Right ventricle myocardium superior (tissue), 1 donor: ENCODE measurements at regions of chr6 and their contacts with region 1.

Region 1: DNA sequence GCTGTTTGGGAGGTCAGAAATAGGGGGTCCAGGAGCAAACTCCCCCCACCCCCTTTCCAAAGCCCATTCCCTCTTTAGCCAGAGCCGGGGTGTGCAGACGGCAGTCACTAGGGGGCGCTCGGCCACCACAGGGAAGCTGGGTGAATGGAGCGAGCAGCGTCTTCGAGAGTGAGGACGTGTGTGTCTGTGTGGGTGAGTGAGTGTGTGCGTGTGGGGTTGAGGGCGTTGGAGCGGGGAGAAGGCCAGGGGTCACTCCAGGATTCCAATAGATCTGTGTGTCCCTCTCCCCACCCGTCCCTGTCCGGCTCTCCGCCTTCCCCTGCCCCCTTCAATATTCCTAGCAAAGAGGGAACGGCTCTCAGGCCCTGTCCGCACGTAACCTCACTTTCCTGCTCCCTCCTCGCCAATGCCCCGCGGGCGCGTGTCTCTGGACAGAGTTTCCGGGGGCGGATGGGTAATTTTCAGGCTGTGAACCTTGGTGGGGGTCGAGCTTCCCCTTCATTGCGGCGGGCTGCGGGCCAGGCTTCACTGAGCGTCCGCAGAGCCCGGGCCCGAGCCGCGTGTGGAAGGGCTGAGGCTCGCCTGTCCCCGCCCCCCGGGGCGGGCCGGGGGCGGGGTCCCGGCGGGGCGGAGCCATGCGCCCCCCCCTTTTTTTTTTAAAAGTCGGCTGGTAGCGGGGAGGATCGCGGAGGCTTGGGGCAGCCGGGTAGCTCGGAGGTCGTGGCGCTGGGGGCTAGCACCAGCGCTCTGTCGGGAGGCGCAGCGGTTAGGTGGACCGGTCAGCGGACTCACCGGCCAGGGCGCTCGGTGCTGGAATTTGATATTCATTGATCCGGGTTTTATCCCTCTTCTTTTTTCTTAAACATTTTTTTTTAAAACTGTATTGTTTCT is at the start of gene VEGFA:
- DNase-seq: peak; percentile 95
- ATAC-seq: peak; percentile 77
- total RNA-seq, gene VEGFA: 230 TPM

Region 2: GRCh38 chr6:43723737-43724295 is 46.0 kb before region 1 on chr6:
- intact Hi-C with region 1: loop called (anchors 5 kb)
- DNase-seq: peak; percentile 75
- ATAC-seq: peak; percentile 90

Region 3: DNA sequence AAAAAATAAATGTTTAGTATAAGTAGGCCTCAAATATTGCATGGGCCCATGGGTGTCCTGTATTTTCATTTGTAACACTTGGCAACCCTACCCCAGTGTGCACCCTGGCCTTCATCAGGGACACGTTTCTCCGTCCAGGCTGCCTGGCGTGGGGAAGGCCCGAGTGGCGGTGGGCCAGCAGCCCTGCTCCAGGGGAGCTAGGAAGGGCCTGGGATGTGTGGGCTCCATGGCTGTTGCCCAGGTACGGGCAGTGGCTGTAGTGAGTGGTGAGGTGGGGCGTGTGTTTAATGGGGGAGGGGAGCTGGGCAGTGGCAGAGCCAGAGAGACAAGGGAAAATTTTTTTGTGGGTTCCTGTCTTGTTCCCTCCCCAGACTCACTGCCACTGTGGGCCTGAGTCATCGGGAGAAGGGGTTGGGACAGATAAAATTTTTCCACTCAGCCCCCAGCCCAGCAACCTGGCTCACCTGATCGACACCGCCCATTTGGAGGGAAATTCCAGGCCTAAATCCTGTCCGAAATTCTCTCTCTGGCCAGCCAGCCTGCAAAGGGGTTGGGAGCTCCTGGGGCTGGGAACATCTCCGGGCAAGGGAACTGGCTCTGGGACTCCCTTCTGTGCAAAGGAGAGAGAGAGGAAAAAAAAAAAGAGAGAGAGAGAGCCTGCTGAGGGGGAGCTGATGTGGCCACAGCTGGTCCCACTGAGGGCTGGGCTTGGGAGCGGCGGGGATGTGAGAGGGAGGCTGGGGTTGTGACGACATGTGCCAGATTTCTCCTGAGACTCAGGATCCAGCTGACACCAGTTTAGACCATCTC is 32.3 kb before region 1 on chr6:
- intact Hi-C with region 1: no loop called
- DNase-seq: peak; percentile 76
- ATAC-seq: peak; percentile 93

Region 4: GRCh38 chr6:43933148-43933885 is 163.5 kb after region 1 on chr6:
- intact Hi-C with region 1: no loop called
- DNase-seq: no peak
- ATAC-seq: no peak

Region 5: DNA sequence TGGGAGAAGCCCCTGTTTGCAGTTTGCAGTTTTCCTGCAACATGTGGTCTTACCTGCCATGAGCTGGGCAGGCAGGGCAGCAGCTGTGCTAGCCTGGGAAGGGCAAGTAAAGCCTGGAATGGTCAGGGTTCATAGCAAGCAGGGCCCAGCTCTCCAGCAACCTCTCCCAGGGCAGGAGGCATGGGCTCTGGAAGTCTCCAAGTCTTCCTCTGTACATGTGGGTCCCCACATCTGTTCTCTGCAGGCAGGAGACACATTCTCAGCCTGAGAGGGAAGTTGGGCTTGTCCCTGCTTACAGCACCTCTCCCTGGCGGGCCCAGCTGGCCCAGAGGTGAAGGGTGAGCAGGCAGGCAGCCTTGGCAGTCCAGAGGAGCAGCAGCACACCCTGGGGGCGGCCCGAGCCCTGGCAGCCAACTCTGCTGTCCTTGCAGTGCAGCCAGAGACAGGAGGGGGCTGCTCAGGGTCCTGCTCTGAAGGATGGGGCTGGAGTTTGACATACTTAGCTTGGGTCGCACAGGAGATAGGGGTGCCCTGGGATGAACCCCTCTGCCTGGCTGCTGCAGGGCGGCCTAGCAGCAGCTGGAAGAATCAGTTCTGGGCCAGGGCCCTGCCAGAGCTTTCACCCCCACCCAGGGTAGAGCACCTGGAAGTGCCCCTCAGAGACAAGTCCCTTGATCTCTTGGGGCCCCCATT is 181.4 kb after region 1 on chr6:
- intact Hi-C with region 1: loop called (anchors 5 kb)
- DNase-seq: peak; percentile 81
- ATAC-seq: peak; percentile 64

Region 6: GRCh38 chr6:43962458-43962857 is 192.7 kb after region 1 on chr6:
- intact Hi-C with region 1: no loop called
- DNase-seq: no peak
- ATAC-seq: no peak

Region 7: DNA sequence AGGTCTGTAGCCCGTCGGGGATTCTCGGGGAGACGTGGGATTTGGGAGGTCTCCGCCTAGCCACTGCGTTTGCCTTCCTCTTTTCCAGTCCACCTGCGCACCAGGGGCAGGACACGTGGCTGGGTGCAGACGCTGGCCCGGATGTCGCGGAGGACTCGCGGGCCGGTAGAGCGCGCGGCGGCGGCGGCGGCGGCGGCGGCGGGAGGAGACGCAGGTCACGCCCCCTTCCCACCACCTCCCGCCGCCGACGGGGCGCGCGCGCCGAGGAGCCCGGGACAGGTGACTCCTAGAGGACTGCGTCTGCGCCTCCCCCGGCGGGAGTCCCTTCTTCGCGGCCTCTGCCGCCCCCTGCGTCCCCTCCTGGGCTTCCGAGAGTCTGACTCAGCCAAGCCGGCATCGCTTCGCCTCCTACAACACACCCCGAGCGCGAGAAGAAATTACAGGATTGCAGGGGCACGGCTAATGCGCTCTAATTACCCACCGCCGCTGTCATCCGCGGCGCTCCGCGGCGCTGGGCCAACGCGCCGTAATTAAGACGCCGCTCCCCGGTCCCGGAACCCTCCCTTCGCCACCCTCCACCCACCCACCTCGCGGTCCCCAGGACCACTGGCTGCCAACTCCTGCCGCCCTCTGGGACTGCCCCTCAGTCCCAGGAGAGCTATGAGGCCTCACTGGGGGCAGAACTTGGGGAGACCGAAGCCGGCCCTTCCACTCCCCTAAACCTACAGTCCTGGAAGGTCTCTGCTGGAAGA is 233.0 kb after region 1 on chr6:
- intact Hi-C with region 1: loop called (anchors 10 kb)
- DNase-seq: peak; percentile 63
- ATAC-seq: peak; percentile 42